Activated naive CD4-positive, alpha-beta T cell treated with anti-CD3 and anti-CD28 coated beads for 36 hours (primary cell): ENCODE measurements at regions of chr12 and their contacts with region 1.

Region 1: DNA sequence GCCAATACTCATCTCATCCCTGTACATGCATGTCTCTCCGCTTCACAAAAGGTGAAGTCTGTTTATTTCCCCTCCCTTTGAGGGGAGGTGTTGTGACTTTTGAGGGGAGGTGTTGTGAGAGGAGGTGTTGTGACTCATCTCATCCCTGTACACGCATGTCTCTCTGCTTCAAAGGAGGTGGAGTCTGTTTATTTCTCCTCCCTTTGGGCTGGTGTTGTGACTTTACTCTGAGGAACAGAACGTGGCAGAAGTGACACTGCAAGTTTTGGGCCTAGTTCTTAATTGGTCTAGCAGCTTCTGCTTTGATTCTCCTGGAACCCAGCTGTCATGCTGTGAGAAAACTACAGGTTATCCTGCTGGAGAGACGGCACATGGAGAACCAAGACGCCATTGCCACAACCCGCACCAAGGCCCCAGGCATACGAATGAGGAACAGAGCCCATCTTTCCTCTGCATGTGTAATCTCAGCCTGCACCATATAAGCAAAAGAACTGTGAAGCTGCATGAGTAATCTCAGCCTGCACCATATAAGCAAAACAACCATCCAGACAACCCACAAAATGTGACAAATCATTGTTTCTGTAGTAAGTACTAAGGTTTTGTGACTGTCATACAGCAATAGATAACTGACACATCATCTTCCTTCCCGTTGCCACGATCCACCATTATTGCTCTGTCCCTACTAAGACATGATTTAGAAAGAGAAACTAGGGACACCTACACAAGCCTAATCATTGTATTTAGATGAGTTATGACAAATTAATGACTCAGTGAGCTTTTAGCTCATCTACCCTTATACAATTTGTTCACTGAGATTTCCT is 30.0 kb downstream of the GALNT4 start:
- DNase-seq: peak; percentile 73
- H3K4me3 Mint-ChIP-seq: peak overlapping the region; percentile 5
- H3K27ac Mint-ChIP-seq: peak overlapping the region; percentile 77
- H3K4me1 Mint-ChIP-seq: peaks cover 17% of the 10 kb centered on the region
- H3K27me3 Mint-ChIP-seq: no peaks in the 10 kb centered on the region

Region 2: GRCh38 chr12:88035271-88035906 is 1459.2 kb before region 1 on chr12:
- CTCF ChIA-PET with region 1: no interaction called
- intact Hi-C with region 1: loop called (anchors 10 kb)
- DNase-seq: peak; percentile 89
- H3K4me3 Mint-ChIP-seq: peak overlapping the region; percentile 93
- H3K27ac Mint-ChIP-seq: peak overlapping the region; percentile 90
- H3K4me1 Mint-ChIP-seq: peaks cover 52% of the 10 kb centered on the region
- H3K27me3 Mint-ChIP-seq: no peaks in the 10 kb centered on the region

Region 3: DNA sequence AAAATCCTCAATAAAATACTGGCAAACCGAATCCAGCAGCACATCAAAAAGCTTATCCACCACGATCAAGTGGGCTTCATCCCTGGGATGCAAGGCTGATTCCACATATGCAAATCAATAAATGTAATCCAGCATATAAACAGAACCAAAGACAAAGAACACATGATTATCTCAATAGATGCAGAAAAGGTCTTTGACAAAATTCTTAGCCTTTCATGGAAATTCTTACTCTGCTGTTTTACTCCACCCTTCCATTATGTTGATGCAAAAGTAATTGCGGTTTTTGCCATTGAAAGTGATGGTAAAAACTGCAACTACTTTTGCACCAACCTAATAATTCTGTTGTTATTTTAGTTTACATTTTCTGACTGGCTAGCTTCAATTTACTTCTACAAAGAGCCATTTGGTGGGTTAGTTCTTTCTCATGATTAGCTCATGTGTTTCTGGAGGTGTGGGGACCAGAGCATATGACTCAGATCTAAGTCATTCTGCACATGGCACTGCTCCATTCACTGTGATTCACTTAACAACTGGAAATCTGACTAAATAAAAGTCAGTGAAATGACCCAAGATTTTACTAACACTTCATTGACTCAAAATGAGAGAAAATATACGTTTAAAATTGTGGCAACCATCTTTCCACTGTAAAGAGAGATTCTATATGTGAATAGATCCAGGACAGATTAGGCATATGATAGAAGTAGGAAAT is 1252.6 kb before region 1 on chr12:
- CTCF ChIA-PET with region 1: no interaction called
- intact Hi-C with region 1: loop called (anchors 1 kb)
- DNase-seq: peak; percentile 65
- H3K4me3 Mint-ChIP-seq: no peak overlapping the region
- H3K27ac Mint-ChIP-seq: peak overlapping the region; percentile 68
- H3K4me1 Mint-ChIP-seq: peaks cover 36% of the 10 kb centered on the region
- H3K27me3 Mint-ChIP-seq: peaks cover 14% of the 10 kb centered on the region

Region 4: GRCh38 chr12:89470741-89471509 is 23.7 kb before region 1 on chr12:
- CTCF ChIA-PET with region 1: interaction called, 5 read pairs
- intact Hi-C with region 1: loop called (anchors 1 kb)
- DNase-seq: no peak
- H3K4me3 Mint-ChIP-seq: no peak overlapping the region
- H3K27ac Mint-ChIP-seq: no peak overlapping the region
- H3K4me1 Mint-ChIP-seq: peaks cover 44% of the 10 kb centered on the region
- H3K27me3 Mint-ChIP-seq: no peaks in the 10 kb centered on the region

Region 5: DNA sequence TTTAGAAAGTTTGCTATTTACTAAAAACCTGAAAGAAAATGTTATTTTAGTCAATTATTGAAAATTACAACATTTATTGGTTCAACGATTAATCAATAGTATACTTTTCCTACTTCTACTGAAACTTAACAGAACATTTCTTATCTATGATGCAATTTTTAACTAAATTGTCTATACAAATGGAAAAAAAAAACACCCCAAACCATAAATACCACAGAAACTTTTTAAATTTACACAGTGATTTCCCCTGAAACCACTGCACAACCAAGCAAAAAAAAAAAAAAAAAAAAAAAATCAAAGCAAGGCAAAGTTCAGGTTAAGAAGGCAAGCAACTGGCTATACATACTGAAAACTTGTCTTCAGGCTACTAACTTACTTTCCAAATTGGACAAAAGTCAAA is 103.1 kb after region 1 on chr12:
- CTCF ChIA-PET with region 1: no interaction called
- intact Hi-C with region 1: loop called (anchors 1 kb)
- DNase-seq: no peak
- H3K4me3 Mint-ChIP-seq: no peak overlapping the region
- H3K27ac Mint-ChIP-seq: peak overlapping the region; percentile 66
- H3K4me1 Mint-ChIP-seq: peaks cover 23% of the 10 kb centered on the region
- H3K27me3 Mint-ChIP-seq: no peaks in the 10 kb centered on the region

Region 6: DNA sequence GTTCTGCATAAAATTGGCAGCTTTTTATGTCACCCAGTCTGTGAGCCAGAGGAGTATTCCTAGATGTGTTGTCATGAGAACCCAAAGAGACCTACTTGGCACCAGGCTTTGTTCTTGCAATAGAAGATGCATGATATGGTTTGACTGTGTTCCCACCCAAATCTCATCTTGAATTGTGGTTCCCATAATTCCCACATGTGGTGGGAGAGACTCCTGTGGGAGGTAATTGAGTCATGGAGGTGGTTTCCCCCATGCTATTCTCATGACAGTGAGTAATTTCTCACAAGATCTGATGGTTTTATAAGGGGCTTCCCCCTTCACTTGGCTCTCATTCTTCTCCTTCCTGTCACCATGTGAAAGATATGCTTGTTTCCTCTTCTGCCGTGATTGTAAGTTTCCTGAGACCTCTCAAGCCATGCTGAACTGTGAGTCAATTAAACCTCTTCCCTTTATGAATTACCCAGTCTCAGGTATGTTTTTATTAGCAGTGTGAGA is 786.0 kb after region 1 on chr12:
- CTCF ChIA-PET with region 1: no interaction called
- intact Hi-C with region 1: loop called (anchors 1 kb)
- DNase-seq: peak; percentile 43
- H3K4me3 Mint-ChIP-seq: no peak overlapping the region
- H3K27ac Mint-ChIP-seq: peak overlapping the region; percentile 56
- H3K4me1 Mint-ChIP-seq: peaks cover 17% of the 10 kb centered on the region
- H3K27me3 Mint-ChIP-seq: peaks cover 9% of the 10 kb centered on the region